Dendritic cell treated with granulocyte-macrophage colony-stimulating factor and Interleukin-4, amounts not matched to agents 40 ng/mL and 50 ng/mL, for 4 days (primary cell): ENCODE measurements at regions of chr3 and their contacts with region 1.

Region 1: GRCh38 chr3:151918253-151919029 is 45.0 kb downstream of the SUCNR1 start:
- H3K4me3 Mint-ChIP-seq: no peak overlapping the region
- H3K27ac Mint-ChIP-seq: no peak overlapping the region
- H3K4me1 Mint-ChIP-seq: peaks cover 23% of the 10 kb centered on the region
- H3K27me3 Mint-ChIP-seq: no peaks in the 10 kb centered on the region

Region 2: DNA sequence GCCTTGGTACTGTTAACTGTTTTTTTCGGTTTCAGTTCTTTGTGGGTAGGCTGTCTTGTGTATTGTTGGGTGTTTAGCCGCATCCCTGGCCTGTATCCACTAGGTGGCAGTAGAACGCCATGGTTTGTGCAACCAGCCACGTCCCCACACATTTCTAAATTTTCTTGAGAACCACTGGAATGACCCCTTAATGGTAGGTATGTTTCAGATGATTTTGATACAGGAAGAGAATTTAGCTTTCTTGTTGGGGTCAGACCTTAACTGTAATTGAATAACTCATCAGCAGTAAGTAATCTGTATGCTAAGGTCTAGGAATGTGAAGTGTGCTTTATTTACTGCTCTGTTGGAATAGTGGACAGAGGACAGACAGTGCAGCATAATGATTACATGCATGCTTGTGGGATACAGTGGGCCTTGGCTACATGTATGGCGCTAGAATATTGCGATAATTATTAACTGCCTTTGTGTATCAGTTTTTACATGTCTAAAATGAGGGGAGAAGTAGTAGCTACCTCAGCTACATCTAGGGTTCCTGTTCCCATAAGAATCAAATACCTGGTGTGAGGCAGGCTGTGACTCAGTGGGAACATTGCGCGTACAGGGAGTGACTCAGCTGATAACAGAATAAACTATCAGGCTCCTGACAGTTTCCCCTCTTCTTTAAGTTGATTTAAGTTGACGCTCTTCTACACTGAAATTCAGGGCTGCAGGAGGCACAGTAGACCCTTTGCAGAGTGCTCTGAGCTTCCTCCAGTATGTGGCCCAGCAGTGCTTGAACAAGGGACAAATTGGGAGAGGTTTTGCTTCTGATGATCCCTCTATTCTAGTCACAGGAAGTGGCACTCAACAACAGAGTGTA is 690.4 kb before region 1 on chr3:
- intact Hi-C with region 1: loop called (anchors 5 kb)
- H3K4me3 Mint-ChIP-seq: peak overlapping the region; percentile 13
- H3K27ac Mint-ChIP-seq: peak overlapping the region; percentile 80
- H3K4me1 Mint-ChIP-seq: peaks cover 75% of the 10 kb centered on the region
- H3K27me3 Mint-ChIP-seq: no peaks in the 10 kb centered on the region

Region 3: DNA sequence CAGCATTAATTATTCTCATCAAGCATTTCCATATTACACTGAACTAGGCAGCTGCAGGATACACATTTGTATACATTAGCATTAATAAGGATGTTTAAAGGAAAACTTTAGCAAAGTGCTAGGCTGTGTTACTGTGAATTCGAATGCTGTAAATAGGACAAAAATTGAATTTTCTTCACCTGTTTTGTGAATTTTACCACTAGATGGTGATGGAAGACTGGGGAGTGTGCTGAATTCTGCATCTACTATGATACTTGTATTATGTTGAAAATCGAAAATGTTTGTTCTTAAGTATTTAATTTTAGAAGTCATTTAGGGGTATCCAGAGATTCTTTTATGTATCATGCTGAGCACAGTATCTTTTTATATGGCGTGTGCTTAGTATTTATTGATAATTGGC is 627.8 kb before region 1 on chr3:
- intact Hi-C with region 1: loop called (anchors 5 kb)
- H3K4me3 Mint-ChIP-seq: no peak overlapping the region
- H3K27ac Mint-ChIP-seq: no peak overlapping the region
- H3K4me1 Mint-ChIP-seq: peaks cover 22% of the 10 kb centered on the region
- H3K27me3 Mint-ChIP-seq: no peaks in the 10 kb centered on the region

Region 4: DNA sequence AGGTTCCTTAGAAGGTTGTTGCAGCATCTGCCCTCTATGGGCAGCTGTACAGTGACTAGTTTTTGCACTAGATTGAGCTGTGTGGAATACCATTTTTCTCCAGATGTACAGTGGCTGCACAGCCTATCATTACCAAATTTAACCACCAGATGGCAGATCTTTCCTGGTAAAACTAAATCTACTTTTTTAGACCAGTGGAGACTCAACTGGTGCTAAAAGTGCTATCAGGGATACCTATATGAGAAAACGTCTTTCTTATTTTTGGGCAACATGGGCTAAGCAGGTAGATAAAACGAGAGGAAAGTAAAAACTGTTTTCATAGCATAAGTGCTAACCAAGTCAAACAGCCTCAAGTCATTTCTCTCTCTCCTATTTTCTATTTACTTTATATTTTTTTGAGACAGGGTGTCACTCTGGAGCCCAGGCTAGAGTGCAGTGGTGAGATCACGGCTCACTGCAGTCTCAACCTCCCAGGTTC is 478.8 kb before region 1 on chr3:
- intact Hi-C with region 1: loop called (anchors 1 kb)
- H3K4me3 Mint-ChIP-seq: no peak overlapping the region
- H3K27ac Mint-ChIP-seq: no peak overlapping the region
- H3K4me1 Mint-ChIP-seq: no peaks in the 10 kb centered on the region
- H3K27me3 Mint-ChIP-seq: no peaks in the 10 kb centered on the region

Region 5: GRCh38 chr3:151468284-151468917 is 450.0 kb before region 1 on chr3:
- intact Hi-C with region 1: loop called (anchors 10 kb)
- H3K4me3 Mint-ChIP-seq: no peak overlapping the region
- H3K27ac Mint-ChIP-seq: no peak overlapping the region
- H3K4me1 Mint-ChIP-seq: no peaks in the 10 kb centered on the region
- H3K27me3 Mint-ChIP-seq: no peaks in the 10 kb centered on the region

Region 6: GRCh38 chr3:151838583-151839312 is 79.7 kb before region 1 on chr3:
- intact Hi-C with region 1: loop called (anchors 2 kb)
- H3K4me3 Mint-ChIP-seq: no peak overlapping the region
- H3K27ac Mint-ChIP-seq: no peak overlapping the region
- H3K4me1 Mint-ChIP-seq: peaks cover 18% of the 10 kb centered on the region
- H3K27me3 Mint-ChIP-seq: no peaks in the 10 kb centered on the region

Region 7: GRCh38 chr3:151875759-151876158 is 42.7 kb before region 1 on chr3:
- intact Hi-C with region 1: loop called (anchors 5 kb)
- H3K4me3 Mint-ChIP-seq: peak overlapping the region; percentile 97
- H3K27ac Mint-ChIP-seq: peak overlapping the region; percentile 92
- H3K4me1 Mint-ChIP-seq: peaks cover 19% of the 10 kb centered on the region
- H3K27me3 Mint-ChIP-seq: no peaks in the 10 kb centered on the region